ENCODE measurements at regions of chr11 and their contacts with region 1.

Region 1: GRCh38 chr11:132158093-132158492 is 787.7 kb downstream of the NTM start:
- DNase-seq: peak; percentile 19 to 64
- H3K4me3 ChIP-seq: no peak overlapping the region
- H3K27ac ChIP-seq: no peak overlapping the region
- H3K4me1 ChIP-seq: no peaks in the 10 kb centered on the region; a peak in 1 of 7 replicates
- H3K27me3 ChIP-seq: no peaks in the 10 kb centered on the region
- CTCF ChIP-seq: peak; percentile 66 to 86 (median 78)
- EP300 ChIP-seq: no peak
- POLR2A ChIP-seq: no peak
- RAD21 ChIP-seq: peak; percentile 58 to 72

Region 2: GRCh38 chr11:132058211-132058772 is 99.8 kb before region 1 on chr11:
- CTCF ChIA-PET with region 1: no interaction called
- POLR2A ChIA-PET with region 1: no interaction called
- DNase-seq: no peak
- H3K4me3 ChIP-seq: no peak overlapping the region
- H3K27ac ChIP-seq: no peak overlapping the region
- H3K4me1 ChIP-seq: no peaks in the 10 kb centered on the region
- H3K27me3 ChIP-seq: no peaks in the 10 kb centered on the region
- CTCF ChIP-seq: no peak
- EP300 ChIP-seq: no peak
- POLR2A ChIP-seq: no peak
- RAD21 ChIP-seq: no peak

Region 3: GRCh38 chr11:132114185-132114584 is 43.9 kb before region 1 on chr11:
- CTCF ChIA-PET with region 1: interaction called, 16 read pairs
- POLR2A ChIA-PET with region 1: no interaction called
- DNase-seq: no peak
- H3K4me3 ChIP-seq: no peak overlapping the region
- H3K27ac ChIP-seq: no peak overlapping the region
- H3K4me1 ChIP-seq: peaks cover 2 to 15% (median 12%) of the 10 kb centered on the region in 4 experiments; a peak in 6 of 7 replicates
- H3K27me3 ChIP-seq: no peaks in the 10 kb centered on the region
- CTCF ChIP-seq: peak; percentile 77 to 88 (median 85)
- EP300 ChIP-seq: no peak
- POLR2A ChIP-seq: no peak
- RAD21 ChIP-seq: peak; percentile 72 to 85

Region 4: GRCh38 chr11:132147464-132147863 is 10.6 kb before region 1 on chr11:
- CTCF ChIA-PET with region 1: interaction called, 12 read pairs
- POLR2A ChIA-PET with region 1: no interaction called
- DNase-seq: no peak
- H3K4me3 ChIP-seq: no peak overlapping the region
- H3K27ac ChIP-seq: no peak overlapping the region
- H3K4me1 ChIP-seq: no peaks in the 10 kb centered on the region; a peak in 1 of 7 replicates
- H3K27me3 ChIP-seq: no peaks in the 10 kb centered on the region
- CTCF ChIP-seq: no peak
- EP300 ChIP-seq: no peak
- POLR2A ChIP-seq: no peak
- RAD21 ChIP-seq: no peak

Region 5: DNA sequence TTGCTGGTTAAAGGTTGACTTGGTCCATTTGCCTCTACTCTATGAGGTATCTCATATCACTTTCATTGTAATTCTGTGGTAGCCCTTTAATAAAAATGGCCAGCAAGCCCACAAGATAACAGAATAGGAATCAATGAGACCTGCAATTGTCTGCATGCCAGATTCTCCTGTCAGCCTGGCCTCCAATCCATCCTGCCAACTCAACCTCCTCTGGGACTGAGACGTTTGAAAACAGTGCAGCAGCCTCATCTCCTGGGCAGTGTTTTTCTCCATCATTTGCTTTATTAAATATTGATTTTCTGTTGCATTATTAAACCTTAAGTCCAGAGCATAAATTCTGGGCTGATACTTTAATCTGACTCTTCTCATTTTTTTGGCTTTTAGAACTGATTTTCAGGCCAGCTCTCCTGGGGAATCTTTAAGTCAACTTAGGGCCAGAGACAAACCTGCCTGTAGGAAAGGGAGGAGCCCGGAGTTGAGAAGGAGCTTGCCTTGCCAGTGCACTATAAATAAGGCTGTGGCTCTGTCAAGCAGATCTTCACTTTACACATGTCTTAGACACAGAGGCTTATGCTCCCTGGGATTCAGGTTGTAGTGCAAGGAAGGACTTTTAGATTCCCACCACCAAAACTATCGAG is 10.4 kb after region 1 on chr11:
- CTCF ChIA-PET with region 1: interaction called, 15 read pairs
- POLR2A ChIA-PET with region 1: no interaction called
- DNase-seq: no peak
- H3K4me3 ChIP-seq: no peak overlapping the region
- H3K27ac ChIP-seq: no peak overlapping the region
- H3K4me1 ChIP-seq: no peaks in the 10 kb centered on the region
- H3K27me3 ChIP-seq: no peaks in the 10 kb centered on the region
- CTCF ChIP-seq: no peak
- EP300 ChIP-seq: no peak
- POLR2A ChIP-seq: no peak
- RAD21 ChIP-seq: no peak

Measured in H1 (cell line).